ENCODE measurements at regions of chr18 and their contacts with region 1.

Region 1: GRCh38 chr18:54269893-54270844 is 852 bp downstream of the POLI start:
- DNase-seq: peak; percentile 79

Region 2: DNA sequence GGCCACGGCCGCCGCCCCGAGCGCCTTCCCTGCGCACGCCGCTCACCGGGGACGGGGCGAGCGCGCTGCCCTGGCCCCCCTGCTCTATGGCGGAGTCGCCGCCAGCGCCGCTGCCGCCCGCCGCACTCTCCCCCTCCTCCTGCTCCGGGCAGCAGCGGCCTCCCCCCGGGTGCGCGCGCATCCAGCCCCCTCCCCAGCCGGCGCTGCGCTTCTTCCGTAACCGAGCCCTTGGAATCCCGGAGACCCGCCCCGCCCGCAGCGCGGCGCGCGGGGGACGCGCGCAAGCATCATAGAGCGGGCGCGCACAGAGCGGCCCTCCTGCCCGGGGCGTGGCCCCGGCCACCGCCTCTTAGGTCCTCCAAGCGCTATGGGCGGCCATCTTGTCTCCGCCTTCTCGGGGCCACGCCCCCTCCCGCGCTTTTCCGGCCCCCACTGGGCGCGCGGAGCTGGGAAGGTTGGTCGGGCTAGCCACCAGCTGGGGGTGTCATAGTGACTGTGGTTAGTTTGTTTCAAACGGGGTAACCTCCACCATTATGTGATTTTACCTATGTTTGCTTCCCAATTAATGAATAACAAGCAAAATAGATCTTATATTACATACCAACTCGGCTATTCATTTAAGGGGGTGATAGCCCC is 45.7 kb before region 1 on chr18 and contains the start of gene MBD2:
- intact Hi-C with region 1: loop called (anchors 1 kb)
- DNase-seq: peak; percentile 96
- total RNA-seq, gene MBD2: 33.4 TPM